Sigmoid colon (tissue), 7 donors: ENCODE measurements at regions of chr12 and their contacts with region 1.

Region 1: GRCh38 chr12:130049666-130050065 is 112.6 kb upstream of the FZD10 start:
- DNase-seq: no peak
- H3K4me3 ChIP-seq: no peak overlapping the region
- H3K27ac ChIP-seq: no peak overlapping the region
- H3K4me1 ChIP-seq: no peaks in the 10 kb centered on the region
- H3K27me3 ChIP-seq: peaks cover 0 to 62% (median 0%) of the 10 kb centered on the region in 3 donors
- CTCF ChIP-seq: no peak
- EP300 ChIP-seq: no peak
- POLR2A ChIP-seq: no peak

Region 2: GRCh38 chr12:129938089-129938488 is 111.6 kb before region 1 on chr12:
- intact Hi-C with region 1: no loop called
- DNase-seq: no peak
- H3K4me3 ChIP-seq: no peak overlapping the region
- H3K27ac ChIP-seq: no peak overlapping the region
- H3K4me1 ChIP-seq: no peaks in the 10 kb centered on the region
- H3K27me3 ChIP-seq: no peaks in the 10 kb centered on the region
- CTCF ChIP-seq: no peak
- EP300 ChIP-seq: no peak
- POLR2A ChIP-seq: no peak

Region 3: GRCh38 chr12:129971721-129972120 is 77.9 kb before region 1 on chr12:
- intact Hi-C with region 1: no loop called
- DNase-seq: no peak
- H3K4me3 ChIP-seq: no peak overlapping the region
- H3K27ac ChIP-seq: no peak overlapping the region
- H3K4me1 ChIP-seq: no peaks in the 10 kb centered on the region
- H3K27me3 ChIP-seq: no peaks in the 10 kb centered on the region
- CTCF ChIP-seq: no peak
- EP300 ChIP-seq: no peak
- POLR2A ChIP-seq: no peak

Region 4: DNA sequence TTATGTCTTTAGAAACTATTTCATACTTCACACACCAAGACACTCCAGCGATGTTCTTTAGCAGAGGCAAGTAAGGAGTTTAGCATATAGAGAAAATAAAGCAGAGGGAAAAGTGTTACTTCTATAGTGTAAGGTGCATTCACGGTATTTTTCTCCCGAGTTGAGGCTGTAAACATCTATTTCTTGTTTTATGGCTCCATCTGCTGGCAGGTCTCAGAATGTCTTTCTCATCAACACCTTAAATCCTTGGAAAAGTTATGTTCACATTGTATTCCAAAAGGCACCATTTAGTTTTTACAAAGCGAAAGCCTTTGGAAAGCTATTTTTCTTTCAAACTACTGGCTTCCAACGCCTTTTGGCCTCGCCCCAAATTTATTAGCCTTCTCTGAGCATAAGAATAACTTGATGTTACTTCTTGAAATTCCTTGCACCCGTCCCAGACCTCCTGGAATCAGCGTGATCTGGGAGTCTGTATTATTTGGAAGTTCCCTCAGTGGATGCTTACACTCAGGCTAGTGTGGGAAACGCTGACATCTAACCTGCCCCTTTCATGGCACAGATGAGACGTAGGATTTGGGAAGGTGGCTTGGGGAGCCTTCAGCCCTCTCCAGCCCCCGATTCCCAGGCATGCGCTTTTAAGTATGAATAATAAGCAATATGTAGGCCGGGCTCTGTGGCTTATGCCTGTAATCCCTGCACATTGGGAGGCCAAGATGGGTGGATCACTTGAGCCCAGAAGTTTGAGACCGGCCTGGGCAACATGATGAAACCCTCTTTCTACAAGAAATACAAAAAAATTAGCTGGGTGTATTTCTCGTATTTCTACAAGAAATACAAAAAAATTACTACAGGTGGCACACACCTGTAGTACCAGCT is 286.1 kb after region 1 on chr12:
- intact Hi-C with region 1: loop called (anchors 2 kb)
- DNase-seq: no peak
- H3K4me3 ChIP-seq: no peak overlapping the region
- H3K27ac ChIP-seq: no peak overlapping the region
- H3K4me1 ChIP-seq: peaks cover 0 to 7% (median 3%) of the 10 kb centered on the region in 4 donors
- H3K27me3 ChIP-seq: peaks cover 0 to 42% (median 37%) of the 10 kb centered on the region in 3 donors
- CTCF ChIP-seq: peak in 3 of 4 experiments; percentile 49 to 66 (median 55)
- EP300 ChIP-seq: no peak
- POLR2A ChIP-seq: no peak